ENCODE measurements at regions of chr4 and their contacts with region 1.

Region 1: GRCh38 chr4:87848622-87849351 is 16.0 kb downstream of the MEPE start:
- DNase-seq: peak; percentile 12 to 42
- H3K4me3 ChIP-seq: peak overlapping the region; percentile 37; the same call in 1 of the 2 replicates
- H3K27ac ChIP-seq: no peak overlapping the region
- H3K4me1 ChIP-seq: peaks cover 6% of the 10 kb centered on the region
- H3K27me3 ChIP-seq: no peaks in the 10 kb centered on the region
- CTCF ChIP-seq: peak; percentile 65; the same call in 1 of the 2 replicates

Region 2: GRCh38 chr4:86908251-86908657 is 940.5 kb before region 1 on chr4:
- CTCF ChIA-PET with region 1: no interaction called
- POLR2A ChIA-PET with region 1: no interaction called
- intact Hi-C with region 1: loop called (anchors 10 kb)
- DNase-seq: no peak
- H3K4me3 ChIP-seq: no peak overlapping the region
- H3K27ac ChIP-seq: no peak overlapping the region
- H3K4me1 ChIP-seq: no peaks in the 10 kb centered on the region
- H3K27me3 ChIP-seq: no peaks in the 10 kb centered on the region
- CTCF ChIP-seq: no peak

Region 3: DNA sequence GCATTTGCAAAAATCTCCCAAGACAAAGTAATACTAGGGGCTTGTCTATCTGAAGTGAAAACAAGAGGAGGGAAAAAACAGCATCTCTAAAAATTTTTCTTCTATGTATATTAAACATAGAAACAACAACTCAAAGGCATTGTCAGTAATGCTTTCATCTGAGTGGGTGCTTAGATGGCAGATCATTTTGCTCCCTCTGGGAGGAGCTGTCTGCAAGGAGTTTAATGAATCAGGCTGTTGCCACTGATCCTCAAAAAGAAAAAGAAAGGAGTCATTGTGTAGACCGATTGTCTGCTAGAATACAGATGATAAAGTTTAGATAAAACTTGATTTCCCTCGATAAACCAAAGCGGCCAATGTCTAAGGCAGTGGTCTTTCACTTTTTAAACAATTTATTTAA is 578.6 kb before region 1 on chr4:
- CTCF ChIA-PET with region 1: no interaction called
- POLR2A ChIA-PET with region 1: no interaction called
- intact Hi-C with region 1: loop called (anchors 5 kb)
- DNase-seq: peak; percentile 5 to 38
- H3K4me3 ChIP-seq: no peak overlapping the region
- H3K27ac ChIP-seq: no peak overlapping the region
- H3K4me1 ChIP-seq: no peaks in the 10 kb centered on the region
- H3K27me3 ChIP-seq: no peaks in the 10 kb centered on the region
- CTCF ChIP-seq: peak; percentile 57

Region 4: GRCh38 chr4:87973283-87974169 is 124.7 kb after region 1 on chr4:
- CTCF ChIA-PET with region 1: interaction called, 8 read pairs
- POLR2A ChIA-PET with region 1: no interaction called
- intact Hi-C with region 1: loop called (anchors 1 kb)
- DNase-seq: peak; percentile 41 to 50
- H3K4me3 ChIP-seq: no peak overlapping the region; the same call in 1 of the 2 replicates
- H3K27ac ChIP-seq: peak overlapping the region; percentile 91
- H3K4me1 ChIP-seq: peaks cover 30% of the 10 kb centered on the region
- H3K27me3 ChIP-seq: no peaks in the 10 kb centered on the region
- CTCF ChIP-seq: peak; percentile 74

Region 5: GRCh38 chr4:87995435-87995834 is 146.6 kb after region 1 on chr4:
- CTCF ChIA-PET with region 1: no interaction called
- POLR2A ChIA-PET with region 1: interaction called, 16 read pairs
- intact Hi-C with region 1: no loop called
- DNase-seq: no peak
- H3K4me3 ChIP-seq: no peak overlapping the region
- H3K27ac ChIP-seq: no peak overlapping the region
- H3K4me1 ChIP-seq: no peaks in the 10 kb centered on the region
- H3K27me3 ChIP-seq: no peaks in the 10 kb centered on the region
- CTCF ChIP-seq: no peak